ENCODE measurements at regions of chr19 and their contacts with region 1.

Region 1: DNA sequence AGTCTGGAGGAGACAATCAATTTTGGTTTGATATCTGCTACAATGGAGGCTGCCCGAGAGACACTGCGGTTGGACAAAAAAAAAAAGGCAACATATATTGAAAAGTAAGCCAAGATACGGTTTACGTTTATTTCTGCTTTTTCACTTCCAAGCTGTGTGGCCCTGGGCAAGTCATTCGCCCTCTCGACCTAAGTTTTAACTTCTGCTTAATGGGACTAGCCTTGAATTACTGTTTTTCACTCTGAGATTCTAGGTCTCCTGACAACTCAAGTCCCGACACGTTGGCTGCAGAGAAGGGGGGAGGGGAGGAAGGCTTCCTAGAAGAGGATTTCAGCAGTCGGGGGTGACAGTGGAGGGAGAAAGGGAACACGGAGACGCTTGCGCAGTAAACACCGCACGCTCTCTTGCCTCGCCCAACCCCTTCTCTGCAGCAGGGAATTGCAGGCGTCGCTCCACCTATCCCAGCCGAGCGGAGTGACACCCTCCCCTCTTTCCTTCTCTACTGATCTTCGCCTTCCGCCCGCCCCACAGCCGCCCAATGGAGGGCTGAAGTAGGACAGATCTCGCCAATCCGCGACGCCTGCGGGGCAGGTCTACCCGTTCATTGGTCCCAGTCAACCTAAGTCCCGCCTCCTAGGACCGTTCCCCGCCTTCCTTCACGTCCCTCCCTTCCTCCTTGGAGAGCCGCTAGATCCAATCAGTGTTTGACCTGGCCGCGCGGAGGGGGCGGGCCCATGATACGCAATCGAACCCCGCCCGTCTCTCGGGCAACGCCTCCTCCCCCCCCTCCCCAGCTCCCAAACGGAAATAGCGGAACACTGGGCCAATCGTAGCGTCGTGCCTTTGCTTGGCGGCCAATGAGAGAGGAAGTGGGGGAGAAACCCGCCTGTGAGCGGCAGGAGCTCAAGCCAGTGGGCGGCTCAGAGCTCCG is 529 bp upstream of the AP2A1 start:
- DNase-seq: peak; percentile 100
- H3K4me3 ChIP-seq: peak overlapping the region; percentile 87 to 99
- H3K27ac ChIP-seq: peak overlapping the region; percentile 89 to 96
- H3K4me1 ChIP-seq: peaks cover 0 to 36% (median 30%) of the 10 kb centered on the region in 4 donors
- H3K27me3 ChIP-seq: no peaks in the 10 kb centered on the region
- CTCF ChIP-seq: peak in 1 of 2 experiments; percentile 47

Region 2: GRCh38 chr19:49727217-49728030 is 38.8 kb before region 1 on chr19:
- intact Hi-C with region 1: no loop called
- DNase-seq: peak in 1 of 2 donors; percentile 38
- H3K4me3 ChIP-seq: no peak overlapping the region
- H3K27ac ChIP-seq: no peak overlapping the region
- H3K4me1 ChIP-seq: no peaks in the 10 kb centered on the region
- H3K27me3 ChIP-seq: peaks cover 0 to 14% of the 10 kb centered on the region in 2 donors
- CTCF ChIP-seq: no peak

Region 3: DNA sequence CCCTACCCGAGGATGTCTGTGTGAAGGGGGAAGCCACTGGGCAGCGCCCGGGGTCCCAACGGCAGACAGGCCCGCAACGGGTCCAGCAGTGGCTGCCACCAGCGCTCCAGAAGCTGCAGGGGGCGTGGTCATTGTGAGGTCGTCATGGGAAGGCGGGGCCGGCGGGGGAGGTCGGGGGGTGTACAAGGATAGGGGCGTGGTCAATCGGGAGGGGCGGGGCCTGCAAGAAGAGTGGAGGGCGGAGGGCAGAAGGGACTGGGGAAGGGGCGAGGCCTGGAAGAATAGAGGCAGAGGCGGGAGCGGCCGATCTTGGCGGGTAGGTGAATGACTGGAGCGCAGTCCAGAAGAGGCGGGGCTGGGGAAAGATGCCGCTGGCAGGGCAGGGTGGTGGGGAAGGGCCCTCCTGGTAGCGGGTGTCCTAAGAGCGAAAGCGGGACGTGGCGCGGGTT is 42.5 kb after region 1 on chr19:
- intact Hi-C with region 1: loop called (anchors 5 kb)
- DNase-seq: peak; percentile 95 to 97
- H3K4me3 ChIP-seq: peak overlapping the region; percentile 65 to 87
- H3K27ac ChIP-seq: peak overlapping the region; percentile 84 to 94
- H3K4me1 ChIP-seq: peaks cover 0 to 28% (median 22%) of the 10 kb centered on the region in 4 donors
- H3K27me3 ChIP-seq: no peaks in the 10 kb centered on the region
- CTCF ChIP-seq: no peak